ENCODE measurements at regions of chr7 and their contacts with region 1.

Region 1: DNA sequence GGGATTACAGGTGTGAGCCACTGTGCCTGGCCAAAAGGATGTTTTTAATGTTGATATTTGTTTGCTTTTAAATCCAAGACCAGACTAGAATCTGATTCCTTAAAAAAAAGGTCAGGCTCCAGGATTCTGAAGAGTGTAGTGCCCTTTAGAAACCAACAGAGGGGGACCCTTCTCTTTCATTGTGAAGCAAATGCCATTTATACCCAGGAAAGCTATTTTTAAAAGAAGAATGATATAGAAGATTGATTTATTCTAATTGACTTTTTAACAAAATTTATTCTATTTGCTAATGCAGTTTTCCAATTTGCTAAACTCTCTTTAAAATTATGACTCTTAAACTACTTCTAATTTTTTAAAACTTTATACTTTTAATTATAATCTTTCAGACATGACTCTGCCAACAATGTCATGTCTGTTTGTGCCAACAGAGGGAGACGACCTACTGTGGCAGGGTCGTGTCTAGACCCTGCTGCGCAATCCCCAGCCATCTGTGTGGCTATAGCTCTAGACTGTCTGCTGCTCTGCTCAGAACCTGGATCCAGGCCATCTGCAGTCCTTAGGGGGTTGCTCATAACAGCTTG is 201.0 kb upstream of the IMMP2L start:
- DNase-seq: peak; percentile 75
- H3K4me3 ChIP-seq: no peak overlapping the region
- H3K27ac ChIP-seq: peak overlapping the region in 1 of 2 experiments; percentile 36; a peak in 1 of 4 replicates
- H3K4me1 ChIP-seq: peaks cover 0 to 3% of the 10 kb centered on the region in 2 experiments; a peak in 1 of 4 replicates
- H3K27me3 ChIP-seq: no peaks in the 10 kb centered on the region
- CTCF ChIP-seq: peak; percentile 99
- EP300 ChIP-seq: no peak
- RAD21 ChIP-seq: peak; percentile 82

Region 2: GRCh38 chr7:110943701-110944345 is 819.5 kb before region 1 on chr7:
- CTCF ChIA-PET with region 1: no interaction called
- POLR2A ChIA-PET with region 1: no interaction called
- DNase-seq: peak; percentile 43
- H3K4me3 ChIP-seq: no peak overlapping the region
- H3K27ac ChIP-seq: peak overlapping the region in 1 of 2 experiments; percentile 50; a peak in 1 of 4 replicates
- H3K4me1 ChIP-seq: peaks cover 6 to 16% of the 10 kb centered on the region in 2 experiments; a peak in 2 of 4 replicates
- H3K27me3 ChIP-seq: no peaks in the 10 kb centered on the region
- CTCF ChIP-seq: no peak
- EP300 ChIP-seq: no peak
- RAD21 ChIP-seq: no peak

Region 3: GRCh38 chr7:111752022-111752582 is 11.2 kb before region 1 on chr7:
- CTCF ChIA-PET with region 1: interaction called, 73 read pairs
- POLR2A ChIA-PET with region 1: no interaction called
- DNase-seq: peak; percentile 72
- H3K4me3 ChIP-seq: peak overlapping the region in 1 of 2 experiments; percentile 28; a peak in 1 of 4 replicates
- H3K27ac ChIP-seq: no peak overlapping the region
- H3K4me1 ChIP-seq: peaks cover 0 to 10% of the 10 kb centered on the region in 2 experiments; a peak in 2 of 4 replicates
- H3K27me3 ChIP-seq: no peaks in the 10 kb centered on the region
- CTCF ChIP-seq: peak; percentile 100
- EP300 ChIP-seq: no peak
- RAD21 ChIP-seq: peak; percentile 78

Region 4: DNA sequence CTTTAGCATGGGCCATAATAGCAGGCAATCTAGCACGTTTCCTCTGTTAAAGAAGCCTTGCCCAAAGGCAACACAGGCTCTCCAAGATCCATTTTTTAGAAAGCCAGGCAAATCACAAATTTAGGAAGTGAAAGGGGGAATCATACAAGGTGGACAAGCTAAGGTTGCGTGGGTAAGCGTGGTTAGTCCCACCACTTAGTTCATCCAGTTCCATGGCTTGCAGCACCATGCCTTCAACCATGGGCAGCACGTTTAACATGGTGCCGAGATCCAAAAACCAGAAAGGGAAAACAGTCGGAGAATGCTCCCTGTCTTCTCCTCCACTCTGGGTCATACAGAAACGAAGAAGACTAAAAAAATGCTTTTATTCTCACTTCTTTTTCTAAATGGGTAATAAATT is 33.4 kb after region 1 on chr7:
- CTCF ChIA-PET with region 1: interaction called, 20 read pairs
- POLR2A ChIA-PET with region 1: no interaction called
- DNase-seq: no peak
- H3K4me3 ChIP-seq: no peak overlapping the region
- H3K27ac ChIP-seq: no peak overlapping the region
- H3K4me1 ChIP-seq: no peaks in the 10 kb centered on the region
- H3K27me3 ChIP-seq: no peaks in the 10 kb centered on the region
- CTCF ChIP-seq: no peak
- EP300 ChIP-seq: no peak
- RAD21 ChIP-seq: no peak

Region 5: GRCh38 chr7:111855161-111855856 is 92.0 kb after region 1 on chr7:
- CTCF ChIA-PET with region 1: interaction called, 187 read pairs
- POLR2A ChIA-PET with region 1: no interaction called
- DNase-seq: peak; percentile 61
- H3K4me3 ChIP-seq: no peak overlapping the region; a peak in 1 of 4 replicates
- H3K27ac ChIP-seq: peak overlapping the region in 1 of 2 experiments; percentile 11; a peak in 1 of 4 replicates
- H3K4me1 ChIP-seq: peaks cover 0 to 11% of the 10 kb centered on the region in 2 experiments; a peak in 2 of 4 replicates
- H3K27me3 ChIP-seq: no peaks in the 10 kb centered on the region
- CTCF ChIP-seq: peak; percentile 86
- EP300 ChIP-seq: no peak
- RAD21 ChIP-seq: peak; percentile 85

Region 6: GRCh38 chr7:111892588-111892987 is 129.3 kb after region 1 on chr7:
- CTCF ChIA-PET with region 1: interaction called, 11 read pairs
- POLR2A ChIA-PET with region 1: no interaction called
- DNase-seq: no peak
- H3K4me3 ChIP-seq: no peak overlapping the region
- H3K27ac ChIP-seq: no peak overlapping the region
- H3K4me1 ChIP-seq: no peaks in the 10 kb centered on the region
- H3K27me3 ChIP-seq: no peaks in the 10 kb centered on the region
- CTCF ChIP-seq: no peak
- EP300 ChIP-seq: no peak
- RAD21 ChIP-seq: no peak

Region 7: GRCh38 chr7:112398534-112398933 is 635.2 kb after region 1 on chr7:
- CTCF ChIA-PET with region 1: interaction called, 12 read pairs
- POLR2A ChIA-PET with region 1: no interaction called
- DNase-seq: no peak
- H3K4me3 ChIP-seq: no peak overlapping the region
- H3K27ac ChIP-seq: no peak overlapping the region
- H3K4me1 ChIP-seq: no peaks in the 10 kb centered on the region; a peak in 1 of 4 replicates
- H3K27me3 ChIP-seq: no peaks in the 10 kb centered on the region
- CTCF ChIP-seq: no peak
- EP300 ChIP-seq: no peak
- RAD21 ChIP-seq: no peak

Region 8: DNA sequence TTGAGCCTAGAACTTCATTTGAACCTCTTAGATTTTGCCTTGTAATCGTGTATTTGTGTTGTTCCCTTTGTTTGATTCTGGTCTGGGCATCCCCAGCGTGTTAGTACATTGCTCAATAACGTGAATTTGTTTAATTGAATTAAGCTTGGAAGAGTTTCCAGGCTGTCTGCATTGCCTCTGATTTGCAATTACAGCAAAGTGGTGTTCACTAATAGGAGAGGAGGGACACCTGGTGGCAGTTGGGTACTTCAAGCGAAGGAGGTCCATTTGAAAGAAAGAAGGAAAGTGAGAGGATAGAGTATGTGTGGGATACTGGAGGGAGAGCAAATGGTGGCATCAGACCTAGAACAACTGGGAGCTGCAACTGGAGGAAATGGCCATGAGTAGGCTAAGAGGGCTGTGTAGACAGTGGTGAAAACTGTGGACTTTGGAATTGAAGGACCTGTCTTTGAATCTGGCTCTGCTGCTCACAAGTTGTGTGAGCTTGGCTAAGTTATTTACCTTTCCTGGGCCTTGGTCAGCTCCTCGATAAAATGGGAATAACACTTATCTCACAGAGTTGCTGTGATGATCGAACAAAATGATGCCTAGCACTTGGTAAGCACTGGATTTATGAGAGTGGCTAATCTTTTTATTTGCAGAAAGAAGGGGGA is 732.6 kb after region 1 on chr7:
- CTCF ChIA-PET with region 1: interaction called, 34 read pairs
- POLR2A ChIA-PET with region 1: no interaction called
- DNase-seq: peak; percentile 57
- H3K4me3 ChIP-seq: no peak overlapping the region
- H3K27ac ChIP-seq: peak overlapping the region; percentile 35 to 70; a peak in 2 of 4 replicates
- H3K4me1 ChIP-seq: peaks cover 5 to 11% of the 10 kb centered on the region in 2 experiments; a peak in 3 of 4 replicates
- H3K27me3 ChIP-seq: no peaks in the 10 kb centered on the region
- CTCF ChIP-seq: peak; percentile 83
- EP300 ChIP-seq: no peak
- RAD21 ChIP-seq: peak; percentile 90